Panc1 (cell line): ENCODE measurements at regions of chr3 and their contacts with region 1.

Region 1: GRCh38 chr3:148379763-148380382 is 317.8 kb upstream of the AGTR1 start:
- DNase-seq: peak; percentile 17
- ATAC-seq: peak; percentile 98
- H3K4me3 ChIP-seq: no peak overlapping the region
- H3K27ac ChIP-seq: no peak overlapping the region
- H3K4me1 ChIP-seq: no peaks in the 10 kb centered on the region
- H3K27me3 ChIP-seq: no peaks in the 10 kb centered on the region
- CTCF ChIP-seq: peak; percentile 60; the same call in 1 of the 2 replicates

Region 2: GRCh38 chr3:147854542-147854941 is 525.3 kb before region 1 on chr3:
- CTCF ChIA-PET with region 1: no interaction called
- POLR2A ChIA-PET with region 1: no interaction called
- in situ Hi-C with region 1: no loop called
- intact Hi-C with region 1: no loop called
- DNase-seq: no peak
- ATAC-seq: no peak
- H3K4me3 ChIP-seq: no peak overlapping the region
- H3K27ac ChIP-seq: no peak overlapping the region
- H3K4me1 ChIP-seq: no peaks in the 10 kb centered on the region
- H3K27me3 ChIP-seq: no peaks in the 10 kb centered on the region
- CTCF ChIP-seq: no peak

Region 3: GRCh38 chr3:148631124-148631903 is 251.4 kb after region 1 on chr3:
- CTCF ChIA-PET with region 1: no interaction called
- POLR2A ChIA-PET with region 1: no interaction called
- in situ Hi-C with region 1: no loop called
- intact Hi-C with region 1: loop called (anchors 10 kb)
- DNase-seq: no peak
- ATAC-seq: no peak
- H3K4me3 ChIP-seq: no peak overlapping the region
- H3K27ac ChIP-seq: no peak overlapping the region
- H3K4me1 ChIP-seq: no peaks in the 10 kb centered on the region
- H3K27me3 ChIP-seq: no peaks in the 10 kb centered on the region
- CTCF ChIP-seq: peak; percentile 35; the same call in 1 of the 2 replicates

Region 4: DNA sequence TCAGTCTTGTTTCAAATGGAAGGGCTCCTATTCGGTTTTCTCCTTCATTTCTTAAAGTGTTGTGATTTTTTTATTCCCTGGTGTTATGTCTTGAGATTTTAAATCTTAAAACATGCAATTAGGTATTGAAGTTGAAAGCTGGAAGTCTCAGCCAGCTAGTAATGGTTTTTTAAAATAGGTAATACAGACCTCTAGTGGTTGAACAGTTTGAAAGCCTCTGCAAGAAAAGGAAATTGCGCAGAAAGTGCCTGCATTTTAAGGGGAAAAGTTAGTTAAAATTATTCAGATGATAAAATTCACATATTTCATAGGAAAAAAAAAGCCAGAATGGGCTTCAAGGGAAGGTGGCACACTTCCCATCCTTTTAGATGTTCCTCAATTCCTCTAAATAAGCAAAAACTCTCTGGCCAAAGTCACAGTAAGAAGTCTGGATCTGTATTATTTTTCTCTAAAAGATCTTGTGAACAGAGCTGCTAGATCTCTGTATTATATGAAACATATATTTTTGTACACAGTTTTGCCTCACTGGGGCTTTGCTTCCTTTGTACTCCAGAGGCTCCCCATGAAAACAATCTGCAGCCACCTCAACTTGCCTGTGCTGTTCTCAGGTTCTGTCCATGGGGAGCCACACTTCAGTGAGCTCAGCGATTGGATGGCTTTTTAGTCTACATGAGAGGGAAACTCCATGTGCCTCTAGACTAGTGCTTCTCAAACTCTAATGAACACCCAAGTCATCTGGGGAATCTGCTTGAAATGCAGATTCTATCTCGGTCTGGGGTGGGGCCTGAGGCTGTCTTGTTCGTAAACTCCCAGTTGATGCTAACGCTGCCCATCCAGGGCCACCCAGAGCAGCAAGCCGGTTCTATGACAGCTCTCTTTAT is 339.3 kb after region 1 on chr3:
- CTCF ChIA-PET with region 1: interaction called, 5 read pairs
- POLR2A ChIA-PET with region 1: no interaction called
- in situ Hi-C with region 1: no loop called
- intact Hi-C with region 1: loop called (anchors 2 kb)
- DNase-seq: no peak
- ATAC-seq: no peak
- H3K4me3 ChIP-seq: no peak overlapping the region
- H3K27ac ChIP-seq: no peak overlapping the region
- H3K4me1 ChIP-seq: no peaks in the 10 kb centered on the region
- H3K27me3 ChIP-seq: peaks cover 2% of the 10 kb centered on the region; the same call in 1 of the 2 replicates
- CTCF ChIP-seq: peak; percentile 67; the same call in 1 of the 2 replicates

Region 5: DNA sequence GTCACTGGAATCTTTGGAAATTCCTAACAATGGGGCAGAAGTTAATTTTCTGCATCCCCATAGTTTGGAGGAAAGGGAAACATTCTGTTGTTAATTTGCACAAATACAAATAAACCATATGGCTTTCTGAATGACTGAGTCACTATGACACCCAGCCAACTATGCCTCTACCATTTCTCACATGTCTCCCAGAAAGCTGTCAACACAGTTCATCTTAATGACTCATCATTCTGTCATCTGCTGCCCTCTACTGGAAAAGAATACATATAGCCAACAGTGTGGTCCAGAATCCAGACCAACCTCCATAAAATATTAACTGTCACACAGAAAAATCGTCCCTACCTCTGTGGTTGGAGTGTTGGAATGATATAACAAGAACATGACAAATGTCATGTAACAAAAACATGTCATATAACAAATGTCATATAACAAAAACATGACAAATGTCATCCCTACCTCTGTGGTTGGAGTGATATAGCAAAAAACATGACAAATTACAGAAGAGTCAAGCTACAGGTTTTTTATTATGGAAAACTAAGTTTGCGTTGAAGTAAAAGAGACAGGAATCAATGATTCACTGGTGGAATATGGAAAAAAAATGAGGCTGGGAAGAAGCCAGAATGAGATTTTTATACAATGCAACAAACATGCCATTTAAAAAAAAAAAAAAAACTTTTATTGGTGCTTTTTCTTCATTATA is 563.8 kb after region 1 on chr3:
- CTCF ChIA-PET with region 1: no interaction called
- POLR2A ChIA-PET with region 1: no interaction called
- in situ Hi-C with region 1: no loop called
- intact Hi-C with region 1: loop called (anchors 5 kb)
- DNase-seq: peak; percentile 80
- ATAC-seq: peak; percentile 86
- H3K4me3 ChIP-seq: no peak overlapping the region
- H3K27ac ChIP-seq: no peak overlapping the region
- H3K4me1 ChIP-seq: no peaks in the 10 kb centered on the region
- H3K27me3 ChIP-seq: peaks cover 12% of the 10 kb centered on the region
- CTCF ChIP-seq: peak; percentile 83